PC-9 (cell line): ENCODE measurements at regions of chr13 and their contacts with region 1.

Region 1: GRCh38 chr13:101323601-101324000 is 92.7 kb downstream of the NALCN start:
- DNase-seq: no peak
- H3K4me3 ChIP-seq: no peak overlapping the region
- H3K27ac ChIP-seq: no peak overlapping the region
- H3K4me1 ChIP-seq: no peaks in the 10 kb centered on the region
- H3K27me3 ChIP-seq: no peaks in the 10 kb centered on the region
- CTCF ChIP-seq: no peak

Region 2: DNA sequence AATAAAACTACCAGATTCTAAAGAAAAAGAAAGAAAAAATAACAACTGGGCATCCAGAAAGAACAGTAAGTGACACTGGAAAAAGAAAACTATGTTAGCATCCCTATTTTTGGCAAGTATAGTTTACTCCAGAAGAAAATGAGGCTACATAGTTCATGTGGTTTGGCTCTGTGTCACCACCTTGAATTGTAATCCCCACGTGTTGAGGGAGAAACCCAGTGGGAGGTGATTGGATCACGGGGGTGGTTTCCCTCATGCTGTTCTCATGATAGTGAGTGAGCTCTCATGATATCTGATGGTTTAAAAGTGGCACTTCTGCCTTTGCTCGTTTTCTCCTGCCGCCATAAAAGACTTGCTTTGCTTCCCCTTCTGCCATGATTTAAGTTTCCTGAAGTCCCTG is 205.8 kb after region 1 on chr13:
- CTCF ChIA-PET with region 1: no interaction called
- POLR2A ChIA-PET with region 1: no interaction called
- intact Hi-C with region 1: no loop called
- DNase-seq: no peak
- H3K4me3 ChIP-seq: no peak overlapping the region
- H3K27ac ChIP-seq: no peak overlapping the region
- H3K4me1 ChIP-seq: no peaks in the 10 kb centered on the region
- H3K27me3 ChIP-seq: no peaks in the 10 kb centered on the region
- CTCF ChIP-seq: no peak

Region 3: DNA sequence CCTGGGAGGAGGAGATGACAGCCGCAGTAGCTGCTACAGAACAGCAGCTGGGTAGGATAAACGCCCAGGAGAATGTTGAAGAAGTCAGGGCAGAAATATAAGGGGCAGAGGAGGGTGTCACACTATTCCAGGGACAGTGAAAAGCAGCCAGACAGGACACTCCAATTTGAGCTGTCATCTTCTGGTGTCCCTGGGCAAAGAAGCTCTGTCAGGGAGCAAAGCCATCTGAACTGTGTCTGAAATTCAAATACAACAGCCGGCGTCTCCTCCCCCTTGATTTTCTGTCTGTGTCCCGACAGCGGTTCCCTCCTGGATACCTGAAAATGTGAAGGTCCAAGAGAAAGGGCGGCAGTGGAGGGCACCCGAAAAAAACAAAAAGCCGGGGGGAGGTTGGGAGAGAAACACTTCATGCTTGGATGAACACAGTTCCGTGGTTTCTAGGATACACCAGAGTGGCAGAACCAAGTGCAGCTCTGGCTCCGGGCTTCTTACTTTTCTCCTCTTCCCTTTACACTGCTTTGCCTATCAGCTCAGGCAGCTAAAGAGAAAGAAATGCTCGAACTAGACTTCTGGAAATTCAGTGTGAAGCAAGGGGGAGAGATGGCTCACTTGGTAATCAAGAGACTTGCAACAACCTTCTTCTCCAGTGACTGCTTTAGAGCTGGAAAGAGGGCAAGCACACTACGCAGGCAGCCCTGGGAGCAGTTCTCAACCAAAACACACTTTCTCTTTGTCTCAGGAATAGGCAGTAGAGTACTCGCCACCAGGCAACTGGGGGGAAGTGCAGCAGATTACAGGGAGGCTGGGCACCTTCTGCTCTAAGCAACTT is 594.4 kb after region 1 on chr13:
- CTCF ChIA-PET with region 1: no interaction called
- POLR2A ChIA-PET with region 1: interaction called, 14 read pairs
- intact Hi-C with region 1: no loop called
- DNase-seq: no peak
- H3K4me3 ChIP-seq: no peak overlapping the region
- H3K27ac ChIP-seq: no peak overlapping the region
- H3K4me1 ChIP-seq: no peaks in the 10 kb centered on the region
- H3K27me3 ChIP-seq: peaks cover 52% of the 10 kb centered on the region
- CTCF ChIP-seq: no peak